ENCODE measurements at regions of chr2 and their contacts with region 1.

Region 1: GRCh38 chr2:85602476-85603234 is at the start of gene TMEM150A:
- DNase-seq: peak; percentile 68
- ATAC-seq: peak; percentile 94
- H3K4me3 ChIP-seq: peak within 1 kb of the TSS; percentile 83 to 85
- H3K27ac ChIP-seq: peak within 1 kb of the TSS; percentile 64
- H3K4me1 ChIP-seq: peaks cover 8 to 17% of the 10 kb centered on the region in 2 experiments
- H3K27me3 ChIP-seq: no peaks in the 10 kb centered on the region
- CTCF ChIP-seq: 0 out of 6 replicates have a peak, but pooled peaks of 1 of the 3 experiments have one; percentile 21
- POLR2A ChIP-seq: peak; percentile 48
- RAD21 ChIP-seq: no peak
- total RNA-seq, gene TMEM150A: 9.9 TPM

Region 2: GRCh38 chr2:85409845-85410583 is 192.6 kb before region 1 on chr2 and contains the start of gene CAPG:
- CTCF ChIA-PET with region 1: no interaction called
- POLR2A ChIA-PET with region 1: no interaction called
- RAD21 ChIA-PET with region 1: no interaction called
- intact Hi-C with region 1: loop called (anchors 5 kb)
- DNase-seq: no peak
- ATAC-seq: peak; percentile 64
- H3K4me3 ChIP-seq: peak within 1 kb of the TSS; percentile 25 to 56
- H3K27ac ChIP-seq: peak within 1 kb of the TSS; percentile 50
- H3K4me1 ChIP-seq: peaks cover 35 to 54% of the 10 kb centered on the region in 2 experiments
- H3K27me3 ChIP-seq: no peaks in the 10 kb centered on the region
- CTCF ChIP-seq: no peak
- POLR2A ChIP-seq: no peak
- RAD21 ChIP-seq: no peak
- total RNA-seq, gene CAPG: 223 TPM

Measured in HCT116 (cell line).